Activated CD8-positive, alpha-beta T cell treated with anti-CD3 and anti-CD28 coated beads, Interleukin-2, amount 10 ng/mL, durations not matched to agents 7 days and 5 days (primary cell): ENCODE measurements at regions of chr5 and their contacts with region 1.

Region 1: DNA sequence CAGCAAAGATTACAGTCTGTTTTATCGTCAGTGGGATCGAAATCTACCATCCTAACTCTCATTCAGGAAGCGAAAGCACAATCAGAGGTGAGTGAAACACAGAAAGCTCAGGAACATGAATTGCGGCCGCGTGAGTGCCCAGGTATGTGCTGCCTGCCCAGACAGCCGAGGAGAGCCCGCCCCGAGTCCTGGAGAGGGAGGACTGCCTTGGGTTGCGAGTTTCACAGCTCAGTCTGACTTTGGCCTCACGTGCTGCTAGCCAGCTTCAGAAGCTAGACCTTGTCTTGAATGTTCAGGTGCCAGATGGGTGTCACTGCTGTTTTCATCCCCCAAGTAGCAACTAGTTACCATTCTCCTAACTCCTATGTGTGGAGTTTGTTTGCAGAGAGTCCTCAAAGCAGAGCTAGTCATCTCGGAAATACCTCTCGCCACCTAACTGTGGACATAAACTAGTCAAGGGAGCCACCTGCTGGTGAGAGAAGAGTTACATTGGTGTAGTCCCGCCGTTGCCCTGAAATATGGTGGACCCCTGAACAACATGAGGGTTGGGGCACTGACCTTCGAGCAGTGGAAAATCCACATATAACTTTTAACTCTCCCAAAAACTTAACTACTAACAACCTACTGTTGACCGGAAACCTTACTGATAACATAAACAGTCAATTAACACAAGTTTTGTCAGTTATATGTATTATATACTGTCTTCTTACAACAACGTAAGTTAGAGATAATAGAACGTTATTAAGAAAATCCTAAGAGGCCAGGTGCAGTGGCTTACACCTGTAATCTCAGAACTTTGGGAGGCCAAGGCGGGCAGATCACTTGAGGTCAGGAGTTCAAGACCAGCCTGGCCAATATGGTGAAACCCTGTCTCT is 80.9 kb downstream of the GOLPH3 start:
- DNase-seq: peak; percentile 79
- ATAC-seq: peak; percentile 93
- H3K4me3 Mint-ChIP-seq: no peak overlapping the region
- H3K27ac Mint-ChIP-seq: no peak overlapping the region
- H3K4me1 Mint-ChIP-seq: peaks cover 5% of the 10 kb centered on the region
- H3K27me3 Mint-ChIP-seq: no peaks in the 10 kb centered on the region

Region 2: DNA sequence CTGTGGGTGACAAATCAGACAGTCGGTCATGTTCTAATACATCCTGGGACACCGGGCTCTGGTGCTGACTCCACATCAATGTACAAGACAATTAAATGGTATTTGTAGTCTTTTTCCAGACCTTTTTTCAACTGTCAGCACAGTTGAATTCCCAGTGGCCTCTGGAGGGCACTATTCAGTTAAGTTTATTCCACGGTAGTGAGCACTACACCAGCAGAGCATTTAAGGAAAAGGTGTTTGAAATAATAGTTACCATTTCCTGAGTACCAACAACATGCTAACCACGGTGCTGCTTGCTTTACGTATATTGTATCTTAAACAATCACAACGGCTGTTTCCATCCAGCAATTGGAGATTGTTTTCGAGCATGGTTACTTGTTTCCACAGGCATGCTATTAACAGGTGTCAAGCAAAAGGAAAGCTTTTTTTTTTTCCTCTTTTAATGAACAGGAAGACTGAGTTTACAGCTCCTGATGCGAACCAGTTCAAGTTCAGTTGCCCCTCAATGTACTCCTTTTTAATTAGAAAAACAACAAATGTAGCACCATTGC is 267.6 kb before region 1 on chr5:
- CTCF ChIA-PET with region 1: interaction called, 35 read pairs
- POLR2A ChIA-PET with region 1: no interaction called
- DNase-seq: peak; percentile 57
- ATAC-seq: peak; percentile 72
- H3K4me3 Mint-ChIP-seq: no peak overlapping the region
- H3K27ac Mint-ChIP-seq: no peak overlapping the region
- H3K4me1 Mint-ChIP-seq: no peaks in the 10 kb centered on the region
- H3K27me3 Mint-ChIP-seq: peaks cover 4% of the 10 kb centered on the region

Region 3: DNA sequence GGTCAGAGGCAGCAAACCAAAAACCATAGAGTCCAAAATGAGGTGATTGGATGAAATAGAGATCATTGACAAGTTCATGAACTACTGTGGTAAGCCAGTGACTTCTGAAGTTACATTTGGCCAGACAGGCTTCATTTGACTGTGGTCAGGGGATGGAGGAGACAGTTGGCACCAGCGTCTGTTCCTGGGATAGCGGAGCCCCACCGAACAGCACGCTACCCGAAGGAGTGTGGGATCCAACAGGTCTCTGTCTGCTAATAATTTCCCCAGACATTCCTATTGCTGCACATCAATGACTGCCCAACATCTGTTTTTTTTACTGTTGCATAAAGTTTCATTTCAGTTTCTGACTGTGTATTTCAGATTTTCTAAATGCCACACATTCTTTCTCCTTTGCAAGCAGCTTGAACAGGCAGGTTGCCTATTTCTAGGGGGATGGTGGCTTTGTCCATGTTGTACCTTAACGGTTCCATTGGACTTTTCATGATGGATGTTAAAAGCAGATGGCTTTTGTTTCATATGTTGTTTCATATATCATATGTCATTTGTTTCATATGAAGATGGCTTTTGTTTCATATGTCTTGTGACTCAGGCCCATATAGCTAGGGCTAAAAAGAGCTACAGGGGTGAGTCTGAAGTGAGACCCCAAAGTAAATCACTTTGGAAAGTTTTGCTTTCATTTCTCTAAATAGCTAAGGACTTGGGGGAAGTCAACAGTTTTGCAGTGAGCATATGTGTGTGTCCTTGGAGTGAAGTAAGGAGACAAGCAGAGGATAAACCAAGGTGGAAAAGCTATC is 99.8 kb before region 1 on chr5:
- CTCF ChIA-PET with region 1: no interaction called
- POLR2A ChIA-PET with region 1: no interaction called
- DNase-seq: no peak
- ATAC-seq: no peak
- H3K4me3 Mint-ChIP-seq: no peak overlapping the region
- H3K27ac Mint-ChIP-seq: no peak overlapping the region
- H3K4me1 Mint-ChIP-seq: peaks cover 6% of the 10 kb centered on the region
- H3K27me3 Mint-ChIP-seq: no peaks in the 10 kb centered on the region

Region 4: GRCh38 chr5:32076699-32077695 is 16.2 kb before region 1 on chr5:
- CTCF ChIA-PET with region 1: interaction called, 14 read pairs
- POLR2A ChIA-PET with region 1: no interaction called
- DNase-seq: peak; percentile 53
- ATAC-seq: no peak
- H3K4me3 Mint-ChIP-seq: no peak overlapping the region
- H3K27ac Mint-ChIP-seq: no peak overlapping the region
- H3K4me1 Mint-ChIP-seq: no peaks in the 10 kb centered on the region
- H3K27me3 Mint-ChIP-seq: no peaks in the 10 kb centered on the region

Region 5: DNA sequence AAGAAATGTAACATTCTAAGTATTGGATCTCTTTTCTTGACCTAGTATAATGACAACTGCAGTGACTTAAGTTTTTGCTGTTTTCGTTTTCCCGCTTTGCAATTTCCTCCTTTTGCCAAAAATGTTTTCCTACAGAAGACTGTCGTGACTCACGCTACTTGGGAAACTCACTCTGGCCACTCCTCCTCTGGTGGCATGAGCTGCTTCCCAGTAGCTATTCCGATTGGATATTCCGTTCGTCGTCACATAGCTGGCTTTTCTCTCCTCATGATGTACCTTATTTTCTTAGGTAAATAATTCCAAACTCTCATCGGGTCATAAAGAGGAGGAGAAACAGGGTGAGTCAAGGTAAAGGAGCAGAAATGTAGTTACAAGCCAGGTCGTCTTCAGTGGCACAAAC is 16.1 kb after region 1 on chr5:
- CTCF ChIA-PET with region 1: interaction called, 13 read pairs
- POLR2A ChIA-PET with region 1: no interaction called
- DNase-seq: no peak
- ATAC-seq: no peak
- H3K4me3 Mint-ChIP-seq: no peak overlapping the region
- H3K27ac Mint-ChIP-seq: no peak overlapping the region
- H3K4me1 Mint-ChIP-seq: no peaks in the 10 kb centered on the region
- H3K27me3 Mint-ChIP-seq: no peaks in the 10 kb centered on the region